Activated CD8-positive, alpha-beta T cell treated with anti-CD3 and anti-CD28 coated beads for 36 hours (primary cell): ENCODE measurements at regions of chr9 and their contacts with region 1.

Region 1: DNA sequence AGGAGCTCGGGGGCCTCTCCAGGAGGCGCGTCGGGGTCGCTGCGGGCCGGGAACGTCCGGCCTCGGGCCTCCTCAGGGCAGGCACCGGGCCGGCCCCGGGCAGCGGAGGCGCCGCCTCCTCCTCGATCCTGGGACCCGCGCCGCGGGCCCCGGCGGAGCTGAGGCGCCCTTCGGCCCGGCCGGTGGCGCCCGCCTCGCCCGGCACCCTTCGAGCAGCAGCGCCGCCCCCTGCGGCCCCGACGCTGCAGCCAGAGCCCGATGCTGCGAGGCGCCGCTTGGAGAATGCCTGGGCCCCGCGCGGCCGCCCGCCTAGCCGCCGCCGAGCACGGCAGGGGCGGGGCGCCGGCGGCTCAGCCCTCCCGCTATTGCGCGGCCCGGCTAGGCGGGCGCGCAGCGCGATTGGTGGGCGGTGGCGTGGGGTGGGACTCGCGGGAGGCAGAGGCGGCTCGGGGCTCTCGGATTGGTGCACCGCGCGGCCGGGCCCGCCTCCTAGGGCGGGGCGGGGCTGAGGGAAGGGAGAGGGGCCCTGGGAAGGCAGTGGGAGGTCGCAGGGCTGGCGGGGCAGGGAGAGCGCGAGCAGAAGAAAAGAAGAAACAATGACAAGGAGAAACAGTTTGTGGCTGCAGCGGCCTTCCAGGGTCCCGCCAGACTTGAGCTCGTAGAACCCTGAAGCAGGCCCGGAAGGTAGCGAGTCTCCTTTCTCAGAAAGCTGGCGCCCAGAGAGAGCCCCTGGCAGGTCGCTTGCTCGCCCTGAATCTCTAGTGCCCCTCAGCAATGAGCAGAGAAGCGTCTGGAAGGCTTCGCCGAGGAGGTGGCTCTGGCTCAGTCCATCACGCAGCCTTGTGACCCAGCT is at the start of gene EEIG1:
- DNase-seq: peak; percentile 97
- ATAC-seq: peak; percentile 87
- H3K4me3 Mint-ChIP-seq: peak within 1 kb of the TSS; percentile 97
- H3K27ac Mint-ChIP-seq: peak within 1 kb of the TSS; percentile 97
- H3K4me1 Mint-ChIP-seq: peaks cover 46% of the 10 kb centered on the region
- H3K27me3 Mint-ChIP-seq: no peaks in the 10 kb centered on the region
- CTCF ChIP-seq: no peak
- total RNA-seq, gene EEIG1: 79.7 to 81.5 TPM

Region 2: DNA sequence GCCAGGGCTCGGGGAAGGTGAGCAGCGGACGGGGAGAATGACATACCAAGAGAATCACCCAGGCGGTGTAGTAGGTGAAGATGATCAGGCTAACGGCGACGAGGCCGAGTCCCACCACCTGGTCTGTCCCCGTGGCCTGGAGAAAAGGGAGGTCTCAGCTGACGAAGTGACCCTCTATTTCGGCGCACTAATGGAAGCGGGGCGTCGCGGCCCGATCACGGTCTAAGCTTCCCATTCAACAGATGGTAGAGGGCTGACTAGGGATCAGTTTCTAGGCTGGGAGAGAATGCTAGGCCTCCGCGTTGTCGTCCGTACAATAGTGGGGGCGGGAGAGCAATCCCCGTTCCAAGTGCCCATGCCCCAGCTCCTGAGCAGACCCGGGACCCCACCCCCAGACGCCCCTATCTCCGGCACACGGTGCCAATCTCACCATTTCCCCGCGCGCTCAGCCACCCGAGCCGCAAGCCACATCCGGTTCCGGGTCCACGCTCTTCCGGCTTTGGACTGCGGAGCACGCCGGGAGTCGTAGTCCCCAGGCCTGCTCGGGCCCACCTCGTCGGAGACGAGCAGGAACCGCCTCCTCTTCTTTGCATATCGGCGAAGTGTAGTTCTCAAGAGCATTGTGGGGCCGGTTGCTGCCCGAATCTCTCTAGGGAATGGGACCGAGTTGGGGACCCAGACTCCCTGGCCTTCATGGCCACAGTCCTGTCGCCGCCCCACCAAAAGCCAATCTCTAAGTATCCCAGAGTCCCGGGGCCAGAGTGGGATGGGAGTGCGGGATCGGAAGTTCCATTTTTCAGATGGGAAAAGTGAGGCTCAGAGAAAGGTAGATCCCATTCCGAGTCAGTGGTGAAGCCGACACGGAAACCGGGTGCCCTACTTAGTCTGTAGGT is 43.3 kb before region 1 on chr9 and contains the start of gene DPM2:
- CTCF ChIA-PET with region 1: interaction called, 91 read pairs
- POLR2A ChIA-PET with region 1: interaction called, 6 read pairs
- intact Hi-C with region 1: loop called (anchors 5 kb)
- DNase-seq: peak; percentile 91
- ATAC-seq: peak; percentile 93
- H3K4me3 Mint-ChIP-seq: peak within 1 kb of the TSS; percentile 93
- H3K27ac Mint-ChIP-seq: peak within 1 kb of the TSS; percentile 95
- H3K4me1 Mint-ChIP-seq: peaks cover 36% of the 10 kb centered on the region
- H3K27me3 Mint-ChIP-seq: no peaks in the 10 kb centered on the region
- CTCF ChIP-seq: no peak
- total RNA-seq, gene DPM2: 41.3 to 43.9 TPM

Region 3: DNA sequence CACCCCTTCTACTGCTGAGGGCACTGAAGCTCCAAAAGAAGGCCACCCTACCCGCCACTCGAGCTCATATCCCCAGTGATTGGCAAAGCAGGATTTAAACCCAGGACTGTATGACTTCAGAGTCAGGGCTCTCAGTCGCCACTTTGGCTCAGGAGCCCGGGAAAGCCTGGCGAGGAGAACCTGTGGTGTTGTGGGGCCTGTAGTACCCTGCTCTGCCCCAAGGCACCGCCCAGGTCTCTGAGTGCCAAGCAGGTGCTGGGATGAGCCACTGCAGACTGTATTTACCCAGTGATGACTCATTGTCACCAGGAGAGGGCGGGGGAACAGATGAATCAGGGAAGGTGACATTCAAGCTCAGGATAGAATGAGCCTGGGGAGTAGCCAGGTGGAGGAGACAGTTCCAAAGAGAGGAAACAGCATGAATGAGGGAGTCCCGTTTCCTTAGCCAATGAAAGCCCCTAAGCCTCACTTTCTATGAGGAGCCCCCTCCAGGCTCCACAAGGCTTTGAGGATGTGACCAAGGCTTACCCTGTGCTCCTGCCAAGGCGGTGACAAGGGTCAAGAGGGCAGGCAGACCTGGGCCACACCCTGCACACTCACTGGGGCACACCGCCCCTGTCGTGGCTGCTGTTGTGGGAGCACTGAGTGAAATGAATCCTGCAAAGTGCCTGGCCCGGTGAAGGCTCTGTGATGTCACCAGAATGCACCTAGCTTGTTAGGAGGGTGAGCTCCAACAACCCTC is 25.5 kb before region 1 on chr9:
- CTCF ChIA-PET with region 1: interaction called, 163 read pairs
- POLR2A ChIA-PET with region 1: interaction called, 408 read pairs
- intact Hi-C with region 1: no loop called
- DNase-seq: peak; percentile 96
- ATAC-seq: peak; percentile 90
- H3K4me3 Mint-ChIP-seq: peak overlapping the region; percentile 46
- H3K27ac Mint-ChIP-seq: peak overlapping the region; percentile 88
- H3K4me1 Mint-ChIP-seq: peaks cover 80% of the 10 kb centered on the region
- H3K27me3 Mint-ChIP-seq: no peaks in the 10 kb centered on the region
- CTCF ChIP-seq: peak; percentile 68